Heart left ventricle (tissue), 16 donors: ENCODE measurements at regions of chr15 and their contacts with region 1.

Region 1: GRCh38 chr15:52518490-52519371 is 9.9 kb downstream of the MYO5A start:
- DNase-seq: no peak
- ATAC-seq: no peak
- H3K4me3 ChIP-seq: no peak overlapping the region
- H3K27ac ChIP-seq: peak overlapping the region in 1 of 12 donors; percentile 58
- H3K4me1 ChIP-seq: peaks cover 0 to 56% (median 4%) of the 10 kb centered on the region in 12 donors
- H3K27me3 ChIP-seq: no peaks in the 10 kb centered on the region
- CTCF ChIP-seq: no peak
- POLR2A ChIP-seq: no peak

Region 2: DNA sequence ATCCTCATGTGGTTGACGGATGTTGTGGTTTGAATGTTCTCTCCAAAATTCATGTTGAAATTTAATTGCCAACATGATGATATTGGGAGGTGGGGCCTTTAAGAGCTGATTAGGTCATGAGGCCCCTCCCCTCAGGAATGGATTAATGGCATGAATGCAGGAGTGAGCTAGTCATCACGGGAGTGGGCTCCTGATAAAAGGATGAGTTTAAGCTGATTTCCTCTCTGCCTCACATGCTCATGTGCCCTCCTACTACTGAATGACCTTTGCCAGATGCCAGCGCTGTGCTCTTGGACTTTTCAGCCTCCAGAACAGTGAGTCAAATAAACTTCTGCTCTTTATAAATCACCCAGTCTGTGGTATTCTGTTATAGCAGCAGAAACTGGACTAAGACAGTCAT is 101.2 kb before region 1 on chr15:
- intact Hi-C with region 1: loop called in 1 of 10 experiments (anchors 10 kb)
- DNase-seq: no peak
- ATAC-seq: peak in 2 of 4 donors; percentile 11 to 31
- H3K4me3 ChIP-seq: no peak overlapping the region
- H3K27ac ChIP-seq: no peak overlapping the region
- H3K4me1 ChIP-seq: peaks cover 0 to 13% (median 0%) of the 10 kb centered on the region in 12 donors
- H3K27me3 ChIP-seq: no peaks in the 10 kb centered on the region
- CTCF ChIP-seq: no peak
- POLR2A ChIP-seq: no peak